ENCODE measurements at regions of chr15 and their contacts with region 1.

Region 1: DNA sequence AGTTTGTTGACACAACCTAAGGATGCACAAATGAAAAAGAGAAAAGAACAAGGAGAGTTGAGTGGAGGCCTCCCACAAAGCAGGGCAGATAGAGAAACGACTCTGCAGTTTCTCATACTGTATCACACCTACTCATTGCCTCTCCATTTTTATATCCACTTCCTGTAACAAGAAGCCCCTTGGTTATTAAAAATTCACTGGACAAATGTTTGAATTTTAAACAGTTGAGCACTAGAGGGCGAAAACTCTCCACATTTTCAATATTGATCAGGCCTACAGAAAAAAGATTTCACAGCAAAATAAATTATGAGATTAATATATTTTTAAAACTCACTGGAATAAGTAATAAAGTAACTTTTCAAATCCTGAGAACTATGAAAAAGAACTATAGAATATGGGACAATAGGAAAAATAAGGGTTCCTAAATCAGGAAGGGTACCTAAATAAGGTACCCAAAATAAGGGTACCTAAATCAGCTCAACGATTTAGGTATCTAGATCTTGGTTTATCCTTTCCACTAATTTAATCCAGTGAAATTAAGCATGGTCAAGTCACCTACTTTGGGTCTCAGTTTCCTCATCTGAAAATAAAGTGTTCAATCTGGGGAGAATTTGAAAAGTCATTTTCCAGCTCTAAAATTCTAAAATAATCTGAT is 47.0 kb upstream of the PPIB start:
- DNase-seq: no peak
- ATAC-seq: no peak
- H3K4me3 ChIP-seq: no peak overlapping the region
- H3K27ac ChIP-seq: no peak overlapping the region
- H3K4me1 ChIP-seq: no peaks in the 10 kb centered on the region
- H3K27me3 ChIP-seq: no peaks in the 10 kb centered on the region

Region 2: GRCh38 chr15:64355944-64356709 is 146.3 kb after region 1 on chr15 and contains the start of gene CSNK1G1:
- intact Hi-C with region 1: loop called in 1 of 2 experiments (anchors 10 kb)
- DNase-seq: peak; percentile 97 to 98
- ATAC-seq: peak; percentile 99
- H3K4me3 ChIP-seq: peak within 1 kb of the TSS; percentile 90 to 91
- H3K27ac ChIP-seq: peak within 1 kb of the TSS in 1 of 2 donors; percentile 9
- H3K4me1 ChIP-seq: no peaks in the 10 kb centered on the region
- H3K27me3 ChIP-seq: no peaks in the 10 kb centered on the region
- total RNA-seq, gene CSNK1G1: 15.1 to 25.3 TPM

Measured in aorta (tissue), 5 donors.